HCT116 (cell line): ENCODE measurements at regions of chr1 and their contacts with region 1.

Region 1: DNA sequence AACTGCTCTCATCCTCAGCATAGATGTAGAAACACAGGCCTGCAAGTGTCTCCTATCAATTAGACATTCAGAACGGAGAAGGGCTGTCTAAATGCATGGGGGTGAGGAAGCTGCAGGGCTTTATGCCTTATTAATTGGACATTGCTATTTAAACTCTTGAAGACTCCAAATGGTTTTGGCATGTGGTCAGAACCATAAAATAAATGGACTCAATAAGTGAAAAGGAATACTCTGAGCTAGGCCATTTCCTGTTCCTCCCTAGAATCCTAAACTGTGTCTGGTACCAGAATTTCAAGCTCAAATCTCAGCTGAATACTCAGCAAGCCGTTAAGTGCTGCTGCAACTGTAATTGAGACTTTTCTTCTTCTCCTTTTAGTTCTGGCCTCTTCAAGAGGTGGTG is 80.4 kb upstream of the C1orf87 start:
- DNase-seq: no peak
- ATAC-seq: no peak
- H3K4me3 ChIP-seq: no peak overlapping the region
- H3K27ac ChIP-seq: no peak overlapping the region
- H3K4me1 ChIP-seq: no peaks in the 10 kb centered on the region
- H3K27me3 ChIP-seq: peaks cover 21% of the 10 kb centered on the region
- CTCF ChIP-seq: no peak
- POLR2A ChIP-seq: no peak
- RAD21 ChIP-seq: no peak

Region 2: DNA sequence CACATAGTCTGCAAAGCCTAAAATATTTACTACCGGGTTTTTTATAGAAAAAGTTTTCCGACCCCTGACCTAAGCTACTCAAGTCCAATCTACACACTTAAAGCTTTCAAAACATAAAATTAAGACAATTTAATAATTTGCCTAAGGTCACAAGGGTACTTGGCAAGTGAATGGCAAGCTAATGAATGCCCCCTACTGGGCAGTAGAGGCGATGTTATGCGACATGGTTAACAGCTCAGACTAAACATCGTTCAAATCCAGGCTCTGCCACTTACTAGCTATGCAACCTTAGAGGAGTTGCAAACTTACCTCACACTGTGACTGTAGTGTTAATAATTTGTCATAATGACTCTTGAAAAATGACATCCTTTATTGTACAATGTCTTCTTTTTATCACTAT is 611.2 kb after region 1 on chr1:
- CTCF ChIA-PET with region 1: interaction called, 16 read pairs
- POLR2A ChIA-PET with region 1: no interaction called
- RAD21 ChIA-PET with region 1: no interaction called
- intact Hi-C with region 1: loop called (anchors 5 kb)
- DNase-seq: peak; percentile 50
- ATAC-seq: peak; percentile 92
- H3K4me3 ChIP-seq: no peak overlapping the region
- H3K27ac ChIP-seq: no peak overlapping the region
- H3K4me1 ChIP-seq: no peaks in the 10 kb centered on the region
- H3K27me3 ChIP-seq: peaks cover 16% of the 10 kb centered on the region
- CTCF ChIP-seq: peak; percentile 55 to 77 (median 67); a peak in 5 of 6 replicates
- POLR2A ChIP-seq: no peak
- RAD21 ChIP-seq: peak; percentile 81